Natural killer cell (primary cell): ENCODE measurements at regions of chr7 and their contacts with region 1.

Region 1: GRCh38 chr7:6272481-6273323 is at the start of gene CYTH3:
- DNase-seq: peak; percentile 88 to 91
- ATAC-seq: peak; percentile 94 to 97 (median 96)
- H3K4me3 ChIP-seq: peak within 1 kb of the TSS; percentile 70
- H3K4me3 Mint-ChIP-seq: peak within 1 kb of the TSS; percentile 94
- H3K27ac ChIP-seq: no peak within 1 kb of the TSS
- H3K27ac Mint-ChIP-seq: peak within 1 kb of the TSS; percentile 63 to 79
- H3K4me1 ChIP-seq: peaks cover 22% of the 10 kb centered on the region
- H3K4me1 Mint-ChIP-seq: peaks cover 22 to 42% of the 10 kb centered on the region in 2 donors
- H3K27me3 ChIP-seq: no peaks in the 10 kb centered on the region
- H3K27me3 Mint-ChIP-seq: peaks cover 0 to 13% of the 10 kb centered on the region in 2 donors
- CTCF ChIP-seq: no peak
- total RNA-seq, gene CYTH3: 7.7 to 42.6 (median 13.6) TPM

Region 2: GRCh38 chr7:6106140-6106904 is 166.4 kb before region 1 on chr7:
- intact Hi-C with region 1: loop called (anchors 1 kb)
- DNase-seq: peak in 1 of 2 donors; percentile 71
- ATAC-seq: peak in 1 of 3 donors; percentile 5
- H3K4me3 ChIP-seq: peak overlapping the region; percentile 75
- H3K4me3 Mint-ChIP-seq: peak overlapping the region; percentile 97
- H3K27ac ChIP-seq: peak overlapping the region; percentile 84
- H3K27ac Mint-ChIP-seq: peak overlapping the region; percentile 93 to 97
- H3K4me1 ChIP-seq: peaks cover 17% of the 10 kb centered on the region
- H3K4me1 Mint-ChIP-seq: peaks cover 35 to 39% of the 10 kb centered on the region in 2 donors
- H3K27me3 ChIP-seq: no peaks in the 10 kb centered on the region
- H3K27me3 Mint-ChIP-seq: no peaks in the 10 kb centered on the region
- CTCF ChIP-seq: no peak

Region 3: GRCh38 chr7:6218329-6218728 is 54.4 kb before region 1 on chr7:
- intact Hi-C with region 1: no loop called
- DNase-seq: no peak
- ATAC-seq: no peak
- H3K4me3 ChIP-seq: no peak overlapping the region
- H3K4me3 Mint-ChIP-seq: no peak overlapping the region
- H3K27ac ChIP-seq: no peak overlapping the region
- H3K27ac Mint-ChIP-seq: peak overlapping the region in 1 of 2 donors; percentile 8
- H3K4me1 ChIP-seq: peaks cover 16% of the 10 kb centered on the region
- H3K4me1 Mint-ChIP-seq: peaks cover 20 to 51% of the 10 kb centered on the region in 2 donors
- H3K27me3 ChIP-seq: no peaks in the 10 kb centered on the region
- H3K27me3 Mint-ChIP-seq: no peaks in the 10 kb centered on the region
- CTCF ChIP-seq: no peak

Region 4: GRCh38 chr7:6228361-6229229 is 44.1 kb before region 1 on chr7:
- intact Hi-C with region 1: loop called (anchors 5 kb)
- DNase-seq: peak in 1 of 2 donors; percentile 14
- ATAC-seq: peak in 2 of 3 donors; percentile 78 to 86
- H3K4me3 ChIP-seq: no peak overlapping the region
- H3K4me3 Mint-ChIP-seq: peak overlapping the region; percentile 77
- H3K27ac ChIP-seq: no peak overlapping the region
- H3K27ac Mint-ChIP-seq: peak overlapping the region; percentile 39 to 64
- H3K4me1 ChIP-seq: peaks cover 46% of the 10 kb centered on the region
- H3K4me1 Mint-ChIP-seq: peaks cover 36 to 44% of the 10 kb centered on the region in 2 donors
- H3K27me3 ChIP-seq: no peaks in the 10 kb centered on the region
- H3K27me3 Mint-ChIP-seq: peaks cover 0 to 2% of the 10 kb centered on the region in 2 donors
- CTCF ChIP-seq: no peak

Region 5: GRCh38 chr7:6409991-6410693 is 137.4 kb after region 1 on chr7:
- intact Hi-C with region 1: no loop called
- DNase-seq: no peak
- ATAC-seq: peak in 1 of 3 donors; percentile 17
- H3K4me3 ChIP-seq: no peak overlapping the region
- H3K4me3 Mint-ChIP-seq: no peak overlapping the region
- H3K27ac ChIP-seq: no peak overlapping the region
- H3K27ac Mint-ChIP-seq: no peak overlapping the region
- H3K4me1 ChIP-seq: no peaks in the 10 kb centered on the region
- H3K4me1 Mint-ChIP-seq: no peaks in the 10 kb centered on the region
- H3K27me3 ChIP-seq: no peaks in the 10 kb centered on the region
- H3K27me3 Mint-ChIP-seq: no peaks in the 10 kb centered on the region
- CTCF ChIP-seq: no peak